CD8-positive, alpha-beta T cell (primary cell): ENCODE measurements at regions of chr1 and their contacts with region 1.

Region 1: DNA sequence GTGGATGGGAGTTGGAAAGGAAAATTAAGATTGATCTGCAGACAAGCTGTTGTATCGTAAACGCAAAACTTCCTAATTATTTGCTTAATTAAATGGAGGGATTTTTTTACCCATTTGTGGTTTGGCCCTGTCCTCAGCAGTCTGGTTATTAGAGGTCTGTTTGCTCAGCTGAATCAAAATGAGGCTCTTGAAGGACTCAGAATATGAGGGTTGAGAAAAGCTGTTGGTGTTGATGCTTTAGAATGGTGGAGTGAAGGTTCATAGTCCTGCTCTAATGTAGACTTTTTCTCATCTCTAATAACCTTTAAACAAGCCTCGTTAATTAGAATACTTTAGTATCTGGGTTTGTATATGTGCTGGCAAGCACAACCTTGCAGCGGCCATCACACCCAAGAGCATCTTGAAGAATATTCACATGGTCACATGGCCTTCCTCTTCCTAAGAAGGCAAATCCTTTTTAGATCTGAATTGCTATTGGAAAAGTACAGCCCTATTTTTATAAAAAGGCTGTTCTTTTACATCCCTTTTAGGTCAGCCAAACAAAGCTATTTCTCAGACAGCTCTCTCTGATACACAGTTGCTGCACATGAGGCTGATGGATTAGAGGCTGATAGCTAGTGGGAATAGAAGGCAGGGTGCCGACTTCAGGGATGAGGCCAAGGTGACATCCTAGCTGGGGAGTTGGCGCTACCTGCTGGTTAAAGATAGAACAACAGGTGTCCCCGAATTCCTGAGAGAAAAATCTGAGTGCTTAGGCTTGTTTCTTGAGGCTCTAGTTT is 53.8 kb downstream of the MACF1 start:
- DNase-seq: peak; percentile 40 to 81 (median 68)
- ATAC-seq: peak; percentile 77
- H3K4me3 ChIP-seq: no peak overlapping the region
- H3K4me3 Mint-ChIP-seq: no peak overlapping the region
- H3K27ac ChIP-seq: peak overlapping the region in 1 of 2 experiments; percentile 28
- H3K27ac Mint-ChIP-seq: peak overlapping the region; percentile 57
- H3K4me1 ChIP-seq: peaks cover 11% of the 10 kb centered on the region
- H3K4me1 Mint-ChIP-seq: peaks cover 28% of the 10 kb centered on the region
- H3K27me3 ChIP-seq: no peaks in the 10 kb centered on the region
- H3K27me3 Mint-ChIP-seq: no peaks in the 10 kb centered on the region
- CTCF ChIP-seq: peak; percentile 91

Region 2: GRCh38 chr1:39183503-39184353 is 74.6 kb before region 1 on chr1:
- CTCF ChIA-PET with region 1: interaction called, 622 read pairs
- POLR2A ChIA-PET with region 1: interaction called, 7 read pairs
- intact Hi-C with region 1: loop called (anchors 1 kb)
- DNase-seq: peak; percentile 60 to 93 (median 83)
- ATAC-seq: peak; percentile 87
- H3K4me3 ChIP-seq: no peak overlapping the region
- H3K4me3 Mint-ChIP-seq: no peak overlapping the region
- H3K27ac ChIP-seq: peak overlapping the region; percentile 46 to 69
- H3K27ac Mint-ChIP-seq: peak overlapping the region; percentile 97
- H3K4me1 ChIP-seq: peaks cover 20% of the 10 kb centered on the region
- H3K4me1 Mint-ChIP-seq: peaks cover 34% of the 10 kb centered on the region
- H3K27me3 ChIP-seq: no peaks in the 10 kb centered on the region
- H3K27me3 Mint-ChIP-seq: no peaks in the 10 kb centered on the region
- CTCF ChIP-seq: peak; percentile 71

Region 3: GRCh38 chr1:39204441-39205081 is 53.8 kb before region 1 on chr1 and contains the start of gene MACF1:
- CTCF ChIA-PET with region 1: interaction called, 58 read pairs
- POLR2A ChIA-PET with region 1: interaction called, 3 read pairs
- intact Hi-C with region 1: no loop called
- DNase-seq: peak in 7 of 9 experiments; percentile 9 to 70 (median 44)
- ATAC-seq: peak; percentile 54
- H3K4me3 ChIP-seq: peak within 1 kb of the TSS; percentile 38 to 50
- H3K4me3 Mint-ChIP-seq: peak within 1 kb of the TSS; percentile 87
- H3K27ac ChIP-seq: peak within 1 kb of the TSS; percentile 38 to 81
- H3K27ac Mint-ChIP-seq: peak within 1 kb of the TSS; percentile 95
- H3K4me1 ChIP-seq: peaks cover 45% of the 10 kb centered on the region
- H3K4me1 Mint-ChIP-seq: peaks cover 64% of the 10 kb centered on the region
- H3K27me3 ChIP-seq: no peaks in the 10 kb centered on the region
- H3K27me3 Mint-ChIP-seq: no peaks in the 10 kb centered on the region
- CTCF ChIP-seq: no peak
- total RNA-seq, gene MACF1: 184 to 193 TPM

Region 4: GRCh38 chr1:39214998-39215873 is 43.1 kb before region 1 on chr1:
- CTCF ChIA-PET with region 1: interaction called, 58 read pairs
- POLR2A ChIA-PET with region 1: interaction called, 8 read pairs
- intact Hi-C with region 1: no loop called
- DNase-seq: peak in 7 of 9 experiments; percentile 20 to 73 (median 58)
- ATAC-seq: peak; percentile 75
- H3K4me3 ChIP-seq: peak overlapping the region; percentile 54 to 64
- H3K4me3 Mint-ChIP-seq: peak overlapping the region; percentile 89
- H3K27ac ChIP-seq: peak overlapping the region; percentile 34 to 81
- H3K27ac Mint-ChIP-seq: peak overlapping the region; percentile 92
- H3K4me1 ChIP-seq: peaks cover 48% of the 10 kb centered on the region
- H3K4me1 Mint-ChIP-seq: peaks cover 61% of the 10 kb centered on the region
- H3K27me3 ChIP-seq: no peaks in the 10 kb centered on the region
- H3K27me3 Mint-ChIP-seq: no peaks in the 10 kb centered on the region
- CTCF ChIP-seq: no peak

Region 5: DNA sequence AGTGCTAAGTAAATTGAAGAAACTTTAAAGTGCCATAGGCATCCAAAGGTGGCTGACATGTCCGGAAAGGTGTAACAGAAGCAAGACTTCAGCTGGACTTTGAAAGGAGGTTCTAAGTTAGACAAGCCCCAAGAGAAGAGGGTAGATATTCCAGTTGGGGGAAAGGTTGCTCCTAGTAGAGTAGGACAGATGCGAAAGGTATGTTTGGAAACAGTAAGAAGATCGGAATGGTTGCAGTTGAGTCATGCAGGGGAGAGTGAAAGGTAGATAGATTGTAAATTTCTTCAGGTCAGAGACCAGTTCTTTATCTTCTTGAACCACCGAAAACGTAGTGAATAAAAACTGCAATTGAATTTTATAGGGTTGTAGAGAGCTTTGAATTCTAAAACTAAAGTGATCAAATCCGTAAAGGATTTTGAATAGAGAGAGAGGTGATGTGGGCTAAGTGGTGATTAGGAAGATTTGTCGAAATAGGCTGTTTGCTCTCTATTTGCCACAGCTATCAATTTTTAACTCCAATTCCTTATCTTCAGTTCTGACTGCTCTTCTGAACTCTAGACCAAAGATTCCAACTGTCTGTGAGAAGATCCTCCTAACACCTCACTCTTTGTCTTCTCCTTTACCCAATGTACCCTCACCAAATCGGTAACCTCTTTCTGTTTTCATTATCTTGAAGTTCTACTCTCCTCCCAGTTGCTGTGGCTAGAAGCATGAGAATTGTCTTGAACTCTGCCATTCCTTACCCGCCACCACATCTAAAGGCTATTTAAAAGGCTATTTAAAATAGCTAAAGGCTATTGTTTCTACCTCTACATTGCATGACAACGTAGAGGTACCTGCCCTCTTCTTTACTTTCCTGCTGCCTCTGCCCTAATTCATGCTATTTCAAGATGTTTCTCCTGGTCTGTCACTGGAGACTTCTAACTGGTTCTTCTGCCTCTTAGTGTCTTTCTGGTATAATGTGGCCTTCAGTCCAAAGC is 37.2 kb before region 1 on chr1:
- CTCF ChIA-PET with region 1: interaction called, 29 read pairs
- POLR2A ChIA-PET with region 1: interaction called, 3 read pairs
- intact Hi-C with region 1: no loop called
- DNase-seq: no peak
- ATAC-seq: no peak
- H3K4me3 ChIP-seq: no peak overlapping the region
- H3K4me3 Mint-ChIP-seq: peak overlapping the region; percentile 32
- H3K27ac ChIP-seq: no peak overlapping the region
- H3K27ac Mint-ChIP-seq: peak overlapping the region; percentile 37
- H3K4me1 ChIP-seq: peaks cover 63% of the 10 kb centered on the region
- H3K4me1 Mint-ChIP-seq: peaks cover 73% of the 10 kb centered on the region
- H3K27me3 ChIP-seq: no peaks in the 10 kb centered on the region
- H3K27me3 Mint-ChIP-seq: no peaks in the 10 kb centered on the region
- CTCF ChIP-seq: no peak

Region 6: DNA sequence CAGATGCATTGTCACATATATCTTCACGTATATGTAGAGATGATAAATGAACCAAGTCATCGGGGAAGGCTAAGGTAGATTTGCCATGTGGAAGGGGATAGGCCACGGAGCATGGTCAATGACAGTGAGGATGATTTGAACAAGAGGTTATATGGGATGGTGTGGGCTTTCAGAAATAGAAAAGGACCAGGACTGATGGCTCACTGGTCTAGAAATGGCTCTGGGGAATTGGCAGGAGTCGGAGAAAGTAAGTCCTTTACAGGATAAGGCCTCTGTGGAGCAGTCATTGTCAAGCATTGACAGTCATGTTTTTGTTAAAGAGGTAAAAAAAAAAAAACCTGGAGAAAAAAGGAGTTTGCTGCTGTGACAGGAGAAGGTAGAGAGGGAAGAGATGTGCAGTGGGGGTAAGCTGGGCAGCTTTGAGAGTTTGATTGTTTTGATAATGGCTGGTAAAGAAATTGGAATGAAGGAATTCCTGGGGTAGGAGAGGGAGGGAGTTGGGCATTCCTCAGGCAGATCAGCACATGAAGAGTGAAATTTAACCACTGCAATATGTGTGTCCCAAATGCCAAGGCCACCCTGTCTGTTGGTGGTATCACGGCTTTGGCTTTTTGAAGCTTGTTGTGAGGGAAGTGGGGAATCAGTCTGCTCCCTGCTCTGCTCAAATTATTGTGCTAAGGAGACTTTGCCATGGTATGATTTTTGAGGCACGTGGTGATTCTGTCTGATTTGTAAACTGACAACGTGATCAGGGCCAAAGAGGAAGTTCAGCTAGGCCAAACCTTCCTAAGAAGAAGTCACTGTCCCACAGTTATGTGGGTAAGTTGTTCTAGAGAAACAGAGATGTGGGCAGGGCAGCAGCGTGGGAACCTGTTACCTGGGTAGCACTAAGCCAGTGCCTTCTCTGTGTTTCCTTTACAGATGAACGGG is 27.8 kb before region 1 on chr1:
- CTCF ChIA-PET with region 1: interaction called, 10 read pairs
- POLR2A ChIA-PET with region 1: no interaction called
- intact Hi-C with region 1: no loop called
- DNase-seq: peak in 3 of 9 experiments; percentile 19 to 45 (median 24)
- ATAC-seq: peak; percentile 49
- H3K4me3 ChIP-seq: no peak overlapping the region
- H3K4me3 Mint-ChIP-seq: peak overlapping the region; percentile 16
- H3K27ac ChIP-seq: peak overlapping the region in 1 of 2 experiments; percentile 73
- H3K27ac Mint-ChIP-seq: peak overlapping the region; percentile 79
- H3K4me1 ChIP-seq: peaks cover 32% of the 10 kb centered on the region
- H3K4me1 Mint-ChIP-seq: peaks cover 59% of the 10 kb centered on the region
- H3K27me3 ChIP-seq: no peaks in the 10 kb centered on the region
- H3K27me3 Mint-ChIP-seq: no peaks in the 10 kb centered on the region
- CTCF ChIP-seq: no peak

Region 7: DNA sequence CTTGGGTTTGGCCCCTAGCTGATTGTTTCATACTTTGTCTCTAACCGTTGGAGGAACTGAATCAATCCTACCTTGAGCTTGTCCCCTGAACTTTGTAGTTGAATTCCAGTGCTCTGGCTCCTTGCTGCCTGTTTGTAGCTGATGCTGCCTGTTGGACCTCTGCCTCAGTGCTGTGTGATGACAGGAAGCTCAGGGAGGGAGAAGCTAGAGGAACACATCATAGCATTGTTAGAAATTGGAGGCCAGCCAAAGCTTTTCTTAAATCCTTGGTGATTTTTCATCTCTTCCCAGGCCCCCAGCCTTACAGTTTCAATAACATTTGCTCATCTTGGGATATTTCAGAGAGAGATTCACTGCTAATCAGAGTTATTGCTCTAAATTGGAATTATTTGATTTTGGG is 19.9 kb before region 1 on chr1:
- CTCF ChIA-PET with region 1: interaction called, 16 read pairs
- POLR2A ChIA-PET with region 1: interaction called, 3 read pairs
- intact Hi-C with region 1: no loop called
- DNase-seq: no peak
- ATAC-seq: no peak
- H3K4me3 ChIP-seq: no peak overlapping the region
- H3K4me3 Mint-ChIP-seq: no peak overlapping the region
- H3K27ac ChIP-seq: peak overlapping the region in 1 of 2 experiments; percentile 0
- H3K27ac Mint-ChIP-seq: peak overlapping the region; percentile 80
- H3K4me1 ChIP-seq: peaks cover 10% of the 10 kb centered on the region
- H3K4me1 Mint-ChIP-seq: peaks cover 60% of the 10 kb centered on the region
- H3K27me3 ChIP-seq: no peaks in the 10 kb centered on the region
- H3K27me3 Mint-ChIP-seq: no peaks in the 10 kb centered on the region
- CTCF ChIP-seq: no peak